ENCODE measurements at regions of chr21 and their contacts with region 1.

Region 1: DNA sequence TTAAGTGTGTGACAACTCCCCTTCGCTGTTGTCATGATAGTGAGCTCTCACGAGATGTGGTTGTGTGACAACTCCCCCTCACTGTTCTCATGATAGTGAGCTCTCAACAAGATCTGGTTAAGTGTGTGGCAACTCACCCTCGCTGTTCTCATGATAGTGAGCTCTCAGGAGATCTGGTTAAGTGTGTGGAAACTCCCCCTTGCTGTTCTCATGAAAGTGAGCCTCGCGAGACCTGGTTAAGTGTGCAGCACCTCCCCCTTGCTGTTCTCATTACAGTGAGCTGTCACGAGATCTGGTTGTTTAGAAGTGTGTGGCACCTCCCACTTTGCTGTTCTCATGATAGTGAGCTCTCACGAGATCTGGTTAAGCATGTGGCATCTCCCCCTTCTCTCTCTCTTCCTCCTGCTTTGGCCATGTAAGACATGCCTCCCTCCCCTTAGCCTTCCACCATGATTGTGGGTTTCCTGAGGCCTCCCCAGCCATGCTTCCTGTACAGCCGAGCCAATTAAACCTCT is 25.1 kb upstream of the LSS start:
- DNase-seq: no peak
- H3K4me3 ChIP-seq: no peak overlapping the region
- H3K27ac ChIP-seq: no peak overlapping the region
- H3K4me1 ChIP-seq: no peaks in the 10 kb centered on the region
- H3K27me3 ChIP-seq: no peaks in the 10 kb centered on the region
- CTCF ChIP-seq: no peak
- POLR2A ChIP-seq: no peak

Region 2: GRCh38 chr21:44454747-44455523 is 1798.7 kb before region 1 on chr21 and contains the start of gene LRRC3:
- intact Hi-C with region 1: loop called in 1 of 2 experiments (anchors 5 kb)
- DNase-seq: peak; percentile 84 to 93 (median 90)
- H3K4me3 ChIP-seq: peak within 1 kb of the TSS in 3 of 4 donors; percentile 25 to 98 (median 40)
- H3K27ac ChIP-seq: peak within 1 kb of the TSS in 1 of 5 donors; percentile 43
- H3K4me1 ChIP-seq: peaks cover 4 to 5% of the 10 kb centered on the region in 2 donors
- H3K27me3 ChIP-seq: no peaks in the 10 kb centered on the region
- CTCF ChIP-seq: no peak
- POLR2A ChIP-seq: no peak
- total RNA-seq, gene LRRC3: 0.67 to 3.2 (median 2.3) TPM

Region 3: GRCh38 chr21:46144464-46145070 is 109.1 kb before region 1 on chr21:
- intact Hi-C with region 1: loop called in 1 of 2 experiments (anchors 10 kb)
- DNase-seq: no peak
- H3K4me3 ChIP-seq: no peak overlapping the region
- H3K27ac ChIP-seq: peak overlapping the region in 1 of 5 donors; percentile 82
- H3K4me1 ChIP-seq: peaks cover 0 to 4% of the 10 kb centered on the region in 2 donors
- H3K27me3 ChIP-seq: no peaks in the 10 kb centered on the region
- CTCF ChIP-seq: no peak
- POLR2A ChIP-seq: no peak

Region 4: GRCh38 chr21:46454142-46454994 is 200.7 kb after region 1 on chr21:
- intact Hi-C with region 1: no loop called
- DNase-seq: peak in 4 of 7 donors; percentile 31 to 66 (median 54)
- H3K4me3 ChIP-seq: no peak overlapping the region
- H3K27ac ChIP-seq: peak overlapping the region in 4 of 5 donors; percentile 27 to 89 (median 59)
- H3K4me1 ChIP-seq: peaks cover 47% of the 10 kb centered on the region in 2 donors
- H3K27me3 ChIP-seq: no peaks in the 10 kb centered on the region
- CTCF ChIP-seq: no peak
- POLR2A ChIP-seq: no peak

Measured in adrenal gland (tissue), 19 donors.